ENCODE measurements at regions of chr3 and their contacts with region 1.

Region 1: DNA sequence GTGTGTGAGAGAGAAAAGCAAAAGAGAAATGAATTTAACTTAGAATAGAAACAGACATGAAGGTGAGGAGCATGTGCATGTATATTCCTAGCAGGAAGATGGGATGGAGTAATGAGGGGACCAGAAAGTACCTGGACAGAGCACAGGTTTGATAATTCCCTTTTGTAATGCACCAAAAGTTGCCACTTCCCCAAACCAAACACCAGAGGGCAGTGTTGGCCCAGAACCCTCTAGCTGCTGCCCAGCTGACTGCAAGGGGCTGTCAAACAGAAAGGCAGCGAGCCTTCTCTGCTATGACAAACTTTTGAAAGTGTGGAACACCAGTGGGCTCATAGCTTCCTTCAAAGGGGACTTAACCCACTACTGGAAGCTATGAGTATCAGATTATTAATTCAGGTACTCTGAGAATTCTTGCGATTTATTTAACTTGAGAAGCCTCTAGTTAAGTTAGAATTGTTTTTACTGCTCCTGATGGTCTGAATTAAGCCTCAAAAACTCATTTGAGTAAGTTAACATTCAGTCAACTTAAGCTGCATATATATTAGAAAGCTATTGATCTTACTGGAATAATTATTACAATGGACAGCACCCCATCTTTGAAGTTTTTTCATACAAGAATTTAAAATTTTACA is 234.9 kb downstream of the NEK10 start:
- DNase-seq: peak; percentile 72
- H3K4me3 ChIP-seq: no peak overlapping the region
- H3K27ac ChIP-seq: no peak overlapping the region
- H3K4me1 ChIP-seq: no peaks in the 10 kb centered on the region
- H3K27me3 ChIP-seq: no peaks in the 10 kb centered on the region
- CTCF ChIP-seq: peak; percentile 83 to 85
- POLR2A ChIP-seq: no peak

Region 2: DNA sequence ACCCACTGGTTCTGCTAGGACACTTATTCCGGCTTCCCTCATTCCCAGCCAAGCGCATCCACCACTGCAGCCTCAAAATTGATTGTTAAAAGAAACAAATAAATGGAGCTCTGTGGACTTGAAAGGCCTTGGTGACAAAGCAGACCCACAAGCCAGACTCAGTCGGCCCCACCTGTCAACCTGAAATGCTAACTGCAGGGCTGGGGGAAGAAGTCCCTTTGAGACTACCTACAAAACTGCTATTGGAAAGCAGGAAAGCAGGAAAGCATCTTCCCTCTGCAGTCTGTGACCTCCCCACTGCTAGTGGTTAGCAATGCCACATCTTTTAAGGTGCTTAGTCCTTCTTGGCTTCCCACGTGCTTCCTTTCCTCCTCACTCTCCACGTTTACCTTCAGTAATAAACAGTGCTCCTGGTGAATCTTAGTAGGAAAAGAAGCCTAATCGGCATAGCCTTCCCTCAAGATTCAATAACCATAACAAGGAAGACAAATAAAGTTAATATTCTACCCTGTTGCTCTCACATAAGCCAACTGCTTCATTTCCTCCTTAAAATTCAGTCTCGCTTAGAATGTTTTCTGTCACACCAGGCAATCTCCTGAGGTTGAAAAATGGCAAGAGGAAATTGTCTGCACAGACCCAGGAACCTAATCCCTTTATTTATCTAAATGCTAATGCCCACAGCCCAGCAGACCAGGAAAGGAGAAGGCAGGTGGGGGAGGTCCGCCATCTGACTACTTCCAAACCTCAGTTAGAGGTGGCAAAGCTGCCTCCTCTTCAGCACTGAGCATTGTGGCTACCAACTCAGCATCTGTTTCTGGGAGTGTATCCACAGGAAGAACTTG is 61.2 kb before region 1 on chr3:
- CTCF ChIA-PET with region 1: no interaction called
- POLR2A ChIA-PET with region 1: no interaction called
- dilution Hi-C with region 1: no loop called
- intact Hi-C with region 1: no loop called
- DNase-seq: no peak
- H3K4me3 ChIP-seq: no peak overlapping the region
- H3K27ac ChIP-seq: no peak overlapping the region
- H3K4me1 ChIP-seq: no peaks in the 10 kb centered on the region
- H3K27me3 ChIP-seq: no peaks in the 10 kb centered on the region
- CTCF ChIP-seq: no peak
- POLR2A ChIP-seq: no peak

Region 3: DNA sequence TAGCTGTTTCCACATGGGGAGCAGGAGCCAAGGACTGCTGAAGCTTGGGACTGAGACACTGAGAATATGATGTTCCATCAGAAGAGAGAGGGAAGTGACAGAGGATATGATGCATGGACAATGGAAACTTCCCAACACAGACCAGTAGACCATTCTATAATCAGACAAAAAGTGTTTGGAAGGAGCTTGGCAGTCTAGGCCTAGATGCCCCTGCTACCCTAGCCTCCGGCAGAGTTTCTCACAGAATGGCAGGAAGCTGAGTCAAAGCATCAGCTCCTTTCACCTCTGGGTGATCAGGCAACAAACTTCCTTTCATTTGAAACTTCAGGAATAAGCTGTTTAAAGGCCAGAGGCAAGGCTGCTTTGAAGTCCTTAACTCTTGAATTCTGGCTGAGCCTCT is 12.9 kb after region 1 on chr3:
- CTCF ChIA-PET with region 1: interaction called, 29 read pairs
- POLR2A ChIA-PET with region 1: no interaction called
- dilution Hi-C with region 1: no loop called
- intact Hi-C with region 1: no loop called
- DNase-seq: peak; percentile 84
- H3K4me3 ChIP-seq: no peak overlapping the region
- H3K27ac ChIP-seq: peak overlapping the region; percentile 96
- H3K4me1 ChIP-seq: peaks cover 26% of the 10 kb centered on the region
- H3K27me3 ChIP-seq: no peaks in the 10 kb centered on the region
- CTCF ChIP-seq: no peak
- POLR2A ChIP-seq: no peak

Region 4: GRCh38 chr3:27253831-27254230 is 119.5 kb after region 1 on chr3:
- CTCF ChIA-PET with region 1: interaction called, 263 read pairs
- POLR2A ChIA-PET with region 1: no interaction called
- dilution Hi-C with region 1: no loop called
- intact Hi-C with region 1: loop called (anchors 1 kb)
- DNase-seq: peak; percentile 46
- H3K4me3 ChIP-seq: no peak overlapping the region
- H3K27ac ChIP-seq: no peak overlapping the region
- H3K4me1 ChIP-seq: no peaks in the 10 kb centered on the region
- H3K27me3 ChIP-seq: no peaks in the 10 kb centered on the region
- CTCF ChIP-seq: peak; percentile 36 to 58
- POLR2A ChIP-seq: no peak

Region 5: DNA sequence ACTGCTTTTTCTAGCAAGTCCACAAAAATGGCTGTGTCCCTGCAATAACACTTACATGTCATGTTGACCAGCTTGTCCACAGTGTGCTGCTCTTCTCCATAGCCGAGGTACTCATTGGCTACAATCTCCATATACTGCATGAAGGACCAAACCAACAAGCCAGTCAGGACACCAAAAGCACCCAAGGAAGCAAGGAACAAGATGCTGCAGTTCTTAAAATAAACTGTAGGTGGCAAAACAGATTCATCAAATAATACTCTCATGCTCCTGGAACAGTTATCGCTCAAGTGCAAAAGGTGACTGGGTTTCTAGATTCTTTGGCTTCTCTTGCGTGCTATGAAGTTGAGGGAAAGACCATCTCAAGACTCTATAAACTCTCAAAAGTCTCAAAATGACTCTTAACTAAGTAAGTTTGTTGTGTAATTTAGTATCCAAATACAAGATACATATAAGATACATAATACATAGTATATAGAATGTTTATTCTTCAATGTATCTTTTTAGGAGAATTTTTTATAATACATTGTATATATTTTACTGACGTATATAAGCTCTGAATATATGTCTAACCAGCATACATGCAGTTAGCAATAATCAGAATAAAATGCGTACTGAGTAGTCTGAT is 177.9 kb after region 1 on chr3:
- CTCF ChIA-PET with region 1: interaction called, 6 read pairs
- POLR2A ChIA-PET with region 1: no interaction called
- dilution Hi-C with region 1: no loop called
- intact Hi-C with region 1: loop called (anchors 1 kb)
- DNase-seq: peak; percentile 79
- H3K4me3 ChIP-seq: no peak overlapping the region
- H3K27ac ChIP-seq: no peak overlapping the region
- H3K4me1 ChIP-seq: peaks cover 9% of the 10 kb centered on the region
- H3K27me3 ChIP-seq: no peaks in the 10 kb centered on the region
- CTCF ChIP-seq: peak; percentile 57 to 68
- POLR2A ChIP-seq: no peak

Region 6: GRCh38 chr3:27699067-27699466 is 564.8 kb after region 1 on chr3:
- CTCF ChIA-PET with region 1: no interaction called
- POLR2A ChIA-PET with region 1: no interaction called
- dilution Hi-C with region 1: no loop called
- intact Hi-C with region 1: loop called (anchors 5 kb)
- DNase-seq: no peak
- H3K4me3 ChIP-seq: no peak overlapping the region
- H3K27ac ChIP-seq: no peak overlapping the region
- H3K4me1 ChIP-seq: peaks cover 3% of the 10 kb centered on the region
- H3K27me3 ChIP-seq: no peaks in the 10 kb centered on the region
- CTCF ChIP-seq: no peak
- POLR2A ChIP-seq: no peak

Region 7: DNA sequence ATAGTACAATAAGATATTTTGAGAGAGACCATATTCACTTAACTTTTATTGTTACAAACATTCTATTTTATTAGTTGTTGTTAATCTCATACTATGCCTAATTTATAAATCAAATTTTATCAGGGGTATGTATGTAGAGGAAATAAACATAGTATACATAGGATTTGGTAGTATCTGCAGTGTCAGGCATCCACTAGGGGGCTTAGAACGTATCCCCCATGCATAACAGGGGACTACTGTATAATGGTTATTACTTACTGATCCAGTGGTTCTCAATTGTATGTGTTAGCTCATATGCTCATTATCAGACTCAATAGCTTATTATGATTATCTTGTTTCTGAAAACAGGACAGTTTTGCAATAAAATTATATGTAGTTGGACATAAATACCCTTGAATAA is 1134.7 kb after region 1 on chr3:
- CTCF ChIA-PET with region 1: no interaction called
- POLR2A ChIA-PET with region 1: no interaction called
- dilution Hi-C with region 1: no loop called
- intact Hi-C with region 1: no loop called
- DNase-seq: no peak
- H3K4me3 ChIP-seq: no peak overlapping the region
- H3K27ac ChIP-seq: no peak overlapping the region
- H3K4me1 ChIP-seq: no peaks in the 10 kb centered on the region
- H3K27me3 ChIP-seq: no peaks in the 10 kb centered on the region
- CTCF ChIP-seq: peak; percentile 7 to 13
- POLR2A ChIP-seq: no peak

Region 8: GRCh38 chr3:28334552-28334951 is 1200.3 kb after region 1 on chr3:
- CTCF ChIA-PET with region 1: interaction called, 3 read pairs
- POLR2A ChIA-PET with region 1: no interaction called
- dilution Hi-C with region 1: no loop called
- intact Hi-C with region 1: loop called (anchors 5 kb)
- DNase-seq: no peak
- H3K4me3 ChIP-seq: no peak overlapping the region
- H3K27ac ChIP-seq: no peak overlapping the region
- H3K4me1 ChIP-seq: no peaks in the 10 kb centered on the region
- H3K27me3 ChIP-seq: no peaks in the 10 kb centered on the region
- CTCF ChIP-seq: no peak
- POLR2A ChIP-seq: no peak